Activated CD4-positive, alpha-beta T cell treated with anti-CD3 and anti-CD28 coated beads, Interleukin-2, amount 10 ng/mL, durations not matched to agents 24 days and 14 days (primary cell): ENCODE measurements at regions of chr2 and their contacts with region 1.

Region 1: GRCh38 chr2:60881047-60881932 is at the start of gene REL:
- DNase-seq: peak; percentile 97
- H3K4me3 Mint-ChIP-seq: peak within 1 kb of the TSS; percentile 97
- H3K27ac Mint-ChIP-seq: peak within 1 kb of the TSS; percentile 97
- H3K4me1 Mint-ChIP-seq: peaks cover 21% of the 10 kb centered on the region
- H3K27me3 Mint-ChIP-seq: no peaks in the 10 kb centered on the region
- total RNA-seq, gene REL: 84.9 and 88.7 TPM in 2 replicates

Region 2: GRCh38 chr2:60806988-60807681 is 74.2 kb before region 1 on chr2:
- intact Hi-C with region 1: loop called (anchors 1 kb)
- DNase-seq: peak; percentile 72
- H3K4me3 Mint-ChIP-seq: peak overlapping the region; percentile 56
- H3K27ac Mint-ChIP-seq: peak overlapping the region; percentile 87
- H3K4me1 Mint-ChIP-seq: peaks cover 46% of the 10 kb centered on the region
- H3K27me3 Mint-ChIP-seq: no peaks in the 10 kb centered on the region

Region 3: DNA sequence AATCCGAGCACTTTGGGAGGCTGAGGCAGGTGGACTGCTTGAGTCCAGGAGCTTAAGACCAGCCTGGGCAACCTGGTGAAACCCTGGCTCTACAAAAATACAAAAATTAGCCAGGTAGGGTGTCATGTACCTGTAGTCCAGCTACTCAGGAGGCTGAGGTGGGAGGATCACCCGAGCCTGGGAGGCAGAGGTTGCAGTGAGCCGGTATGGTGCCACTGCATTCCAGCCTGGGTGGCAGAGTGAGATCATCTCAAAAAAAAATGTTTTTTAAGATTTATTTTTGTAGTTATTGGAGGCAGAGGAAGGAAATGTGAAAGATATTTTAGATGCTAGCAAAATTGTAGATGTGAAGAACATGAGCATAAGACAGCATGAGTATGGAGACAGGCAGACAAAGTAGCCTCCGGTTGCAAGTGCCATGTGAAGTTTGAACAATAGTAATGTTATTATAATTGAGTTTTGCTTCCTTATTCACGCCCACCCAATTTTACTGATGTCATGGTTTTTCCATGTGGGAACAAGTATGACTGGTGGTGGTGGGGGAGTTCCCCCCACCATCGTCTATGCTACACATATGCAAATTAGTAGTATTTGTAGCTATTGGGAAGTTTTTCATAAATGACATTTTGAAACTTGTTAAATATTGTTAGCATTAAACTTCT is 18.1 kb after region 1 on chr2:
- intact Hi-C with region 1: loop called (anchors 1 kb)
- DNase-seq: no peak
- H3K4me3 Mint-ChIP-seq: peak overlapping the region; percentile 58
- H3K27ac Mint-ChIP-seq: peak overlapping the region; percentile 90
- H3K4me1 Mint-ChIP-seq: peaks cover 37% of the 10 kb centered on the region
- H3K27me3 Mint-ChIP-seq: no peaks in the 10 kb centered on the region

Region 4: GRCh38 chr2:60998628-60999545 is 117.6 kb after region 1 on chr2:
- intact Hi-C with region 1: loop called (anchors 5 kb)
- DNase-seq: no peak
- H3K4me3 Mint-ChIP-seq: no peak overlapping the region
- H3K27ac Mint-ChIP-seq: no peak overlapping the region
- H3K4me1 Mint-ChIP-seq: no peaks in the 10 kb centered on the region
- H3K27me3 Mint-ChIP-seq: no peaks in the 10 kb centered on the region

Region 5: DNA sequence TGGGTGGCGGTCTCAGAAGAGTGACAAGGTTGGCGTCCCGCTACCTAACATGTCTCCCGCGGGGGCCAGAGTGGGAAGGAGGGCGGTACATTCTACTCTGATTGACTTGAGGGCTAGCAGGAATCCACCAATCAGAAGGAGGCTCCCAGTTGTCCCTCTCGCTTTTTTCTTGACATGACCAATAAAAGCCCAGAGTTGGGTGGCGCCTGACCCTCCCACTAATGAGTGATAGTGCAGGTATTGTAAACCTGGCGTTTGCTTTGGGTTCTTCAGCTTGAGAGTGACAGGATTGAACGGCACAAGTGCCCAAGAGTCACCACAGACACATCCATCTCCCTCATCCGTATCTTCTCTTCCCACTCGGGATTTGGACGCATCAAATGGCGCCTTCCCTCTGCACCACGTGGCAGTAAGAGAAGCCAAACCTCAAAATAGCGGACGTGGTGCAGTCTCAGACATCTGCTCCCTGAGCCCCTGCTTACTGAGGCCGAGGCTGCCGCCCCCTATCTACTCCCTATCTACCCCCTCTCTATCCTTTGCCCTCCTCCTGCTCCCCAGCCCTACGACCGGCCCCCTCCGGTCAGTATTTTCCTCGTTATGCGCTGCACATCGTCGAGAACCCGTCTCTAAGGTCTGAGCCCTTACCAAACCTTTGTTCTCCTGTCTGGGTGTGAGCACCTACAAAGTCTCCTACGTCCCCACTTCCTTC is 973.3 kb after region 1 on chr2:
- intact Hi-C with region 1: loop called (anchors 5 kb)
- DNase-seq: peak; percentile 96
- H3K4me3 Mint-ChIP-seq: peak overlapping the region; percentile 96
- H3K27ac Mint-ChIP-seq: peak overlapping the region; percentile 88
- H3K4me1 Mint-ChIP-seq: peaks cover 16% of the 10 kb centered on the region
- H3K27me3 Mint-ChIP-seq: no peaks in the 10 kb centered on the region